ENCODE measurements at regions of chr3 and their contacts with region 1.

Region 1: DNA sequence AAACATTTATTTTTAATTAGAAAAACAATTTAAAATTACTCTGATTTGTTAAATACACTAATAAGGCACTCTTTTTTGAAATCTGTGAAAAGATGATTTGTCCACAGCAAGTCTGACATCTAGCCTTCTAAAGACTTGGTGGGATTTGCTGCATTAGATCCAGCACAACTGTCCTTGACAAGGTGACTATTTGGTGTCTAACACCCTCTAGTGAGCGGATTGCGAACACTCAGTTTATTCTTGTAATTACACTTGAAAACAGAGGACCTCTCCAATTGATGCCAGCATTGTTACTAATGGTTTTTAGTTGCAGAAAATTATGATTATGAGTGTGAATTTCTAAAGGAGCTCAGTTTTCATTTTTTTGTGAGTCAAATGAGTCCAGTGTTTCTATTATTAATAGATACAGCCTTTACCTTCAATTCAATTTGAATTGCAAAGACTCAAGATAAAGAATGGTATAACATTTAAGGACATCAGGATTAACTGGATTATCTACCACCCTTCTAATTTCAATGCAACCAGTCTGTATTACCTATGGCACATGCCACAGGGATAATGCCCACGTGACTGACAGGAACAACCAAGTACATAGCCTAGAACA is 29.7 kb upstream of the STRIT1 start:
- DNase-seq: peak in 1 of 2 donors; percentile 88
- H3K4me3 ChIP-seq: no peak overlapping the region
- H3K27ac ChIP-seq: no peak overlapping the region
- H3K4me1 ChIP-seq: no peaks in the 10 kb centered on the region
- H3K27me3 ChIP-seq: no peaks in the 10 kb centered on the region
- CTCF ChIP-seq: peak in 5 of 7 experiments; percentile 30 to 51 (median 45)
- EP300 ChIP-seq: no peak
- POLR2A ChIP-seq: no peak

Region 2: DNA sequence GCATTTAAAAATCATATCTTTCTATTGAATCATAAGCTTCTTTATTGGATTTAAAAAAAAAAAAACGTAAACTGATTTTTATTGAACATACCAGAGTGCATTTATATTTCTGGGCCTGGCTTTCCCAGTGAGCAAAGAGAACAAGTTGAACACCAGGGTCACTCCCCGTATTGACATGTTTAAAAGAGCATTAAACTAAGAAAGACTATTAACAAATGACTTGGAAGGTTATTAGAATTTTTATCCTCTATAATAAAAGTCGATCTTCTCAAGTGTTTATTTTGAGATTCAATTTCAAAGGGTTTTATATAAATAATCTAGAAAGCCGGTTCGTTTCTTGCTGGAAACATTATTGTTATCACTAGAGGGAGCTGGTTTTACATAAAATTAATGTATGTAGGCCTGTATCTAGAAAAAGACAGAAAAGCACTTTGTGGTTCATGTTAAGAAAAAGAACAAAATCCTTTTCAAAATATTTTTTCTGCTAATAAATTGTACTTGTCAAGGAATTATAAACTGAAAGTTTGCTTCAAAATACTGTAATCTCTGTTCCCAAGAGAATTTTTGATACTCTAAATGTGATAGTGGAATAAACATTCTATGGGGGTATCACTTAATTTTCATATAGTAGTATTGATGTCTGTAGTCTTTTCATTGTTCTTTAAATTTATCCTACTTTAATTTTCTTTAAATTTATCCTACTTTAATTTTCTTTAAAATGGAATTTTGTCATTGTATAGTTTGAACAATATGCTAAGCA is 564.9 kb before region 1 on chr3:
- intact Hi-C with region 1: loop called (anchors 10 kb)
- DNase-seq: peak in 1 of 2 donors; percentile 46
- H3K4me3 ChIP-seq: no peak overlapping the region
- H3K27ac ChIP-seq: no peak overlapping the region
- H3K4me1 ChIP-seq: peaks cover 0 to 10% (median 0%) of the 10 kb centered on the region in 4 donors
- H3K27me3 ChIP-seq: no peaks in the 10 kb centered on the region
- CTCF ChIP-seq: peak in 3 of 7 experiments; percentile 15 to 37 (median 31)
- EP300 ChIP-seq: no peak
- POLR2A ChIP-seq: no peak

Region 3: GRCh38 chr3:155252535-155252934 is 70.6 kb before region 1 on chr3:
- intact Hi-C with region 1: no loop called
- DNase-seq: no peak
- H3K4me3 ChIP-seq: no peak overlapping the region
- H3K27ac ChIP-seq: no peak overlapping the region
- H3K4me1 ChIP-seq: no peaks in the 10 kb centered on the region
- H3K27me3 ChIP-seq: no peaks in the 10 kb centered on the region
- CTCF ChIP-seq: no peak
- EP300 ChIP-seq: no peak
- POLR2A ChIP-seq: no peak

Region 4: DNA sequence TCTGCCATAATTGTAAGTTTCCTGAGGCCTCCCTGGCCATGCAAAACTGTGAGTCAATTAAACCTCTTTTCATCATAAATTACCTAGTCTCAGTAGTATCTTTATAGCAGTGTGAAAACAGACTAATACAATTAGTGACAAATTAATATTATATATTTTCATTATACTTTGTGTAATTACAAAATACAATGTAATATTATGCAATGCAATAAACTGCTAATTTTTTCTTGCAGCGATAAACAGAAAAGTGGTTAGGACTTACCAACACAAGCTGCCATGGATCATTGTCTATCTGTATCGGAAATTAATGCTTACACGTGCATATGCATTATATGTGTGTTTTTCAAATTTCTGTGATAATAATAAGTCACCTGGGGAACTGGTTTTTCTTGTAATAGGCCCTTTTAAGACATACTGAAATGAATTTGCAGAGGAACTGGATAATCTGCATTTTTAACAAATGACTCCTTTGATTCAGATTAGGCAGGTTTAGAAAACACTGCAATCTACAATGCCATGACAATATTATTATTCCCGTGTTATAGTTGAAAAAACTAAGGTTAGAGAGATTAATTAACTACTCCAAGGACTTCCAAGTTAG is 53.2 kb before region 1 on chr3:
- intact Hi-C with region 1: no loop called
- DNase-seq: peak in 1 of 2 donors; percentile 62
- H3K4me3 ChIP-seq: no peak overlapping the region
- H3K27ac ChIP-seq: no peak overlapping the region
- H3K4me1 ChIP-seq: no peaks in the 10 kb centered on the region
- H3K27me3 ChIP-seq: no peaks in the 10 kb centered on the region
- CTCF ChIP-seq: no peak
- EP300 ChIP-seq: no peak
- POLR2A ChIP-seq: no peak

Region 5: GRCh38 chr3:155282385-155283091 is 40.6 kb before region 1 on chr3:
- intact Hi-C with region 1: no loop called
- DNase-seq: no peak
- H3K4me3 ChIP-seq: no peak overlapping the region
- H3K27ac ChIP-seq: no peak overlapping the region
- H3K4me1 ChIP-seq: no peaks in the 10 kb centered on the region
- H3K27me3 ChIP-seq: no peaks in the 10 kb centered on the region
- CTCF ChIP-seq: no peak
- EP300 ChIP-seq: no peak
- POLR2A ChIP-seq: no peak

Measured in stomach (tissue), 19 donors.